HEK293 (cell line): ENCODE measurements at regions of chr20 and their contacts with region 1.

Region 1: GRCh38 chr20:36167826-36168531 is 13.4 kb downstream of the EPB41L1 start:
- H3K4me3 ChIP-seq: no peak overlapping the region
- H3K27ac ChIP-seq: no peak overlapping the region
- H3K4me1 ChIP-seq: no peaks in the 10 kb centered on the region
- CTCF ChIP-seq: no peak

Region 2: GRCh38 chr20:36154700-36155628 is 13.0 kb before region 1 on chr20 and contains the start of gene EPB41L1:
- CTCF ChIA-PET with region 1: interaction called, 21 read pairs
- POLR2A ChIA-PET with region 1: no interaction called
- H3K4me3 ChIP-seq: peak within 1 kb of the TSS; percentile 55
- H3K27ac ChIP-seq: peak within 1 kb of the TSS; percentile 46; the same call in 1 of the 2 replicates
- H3K4me1 ChIP-seq: peaks cover 8% of the 10 kb centered on the region
- CTCF ChIP-seq: no peak

Region 3: DNA sequence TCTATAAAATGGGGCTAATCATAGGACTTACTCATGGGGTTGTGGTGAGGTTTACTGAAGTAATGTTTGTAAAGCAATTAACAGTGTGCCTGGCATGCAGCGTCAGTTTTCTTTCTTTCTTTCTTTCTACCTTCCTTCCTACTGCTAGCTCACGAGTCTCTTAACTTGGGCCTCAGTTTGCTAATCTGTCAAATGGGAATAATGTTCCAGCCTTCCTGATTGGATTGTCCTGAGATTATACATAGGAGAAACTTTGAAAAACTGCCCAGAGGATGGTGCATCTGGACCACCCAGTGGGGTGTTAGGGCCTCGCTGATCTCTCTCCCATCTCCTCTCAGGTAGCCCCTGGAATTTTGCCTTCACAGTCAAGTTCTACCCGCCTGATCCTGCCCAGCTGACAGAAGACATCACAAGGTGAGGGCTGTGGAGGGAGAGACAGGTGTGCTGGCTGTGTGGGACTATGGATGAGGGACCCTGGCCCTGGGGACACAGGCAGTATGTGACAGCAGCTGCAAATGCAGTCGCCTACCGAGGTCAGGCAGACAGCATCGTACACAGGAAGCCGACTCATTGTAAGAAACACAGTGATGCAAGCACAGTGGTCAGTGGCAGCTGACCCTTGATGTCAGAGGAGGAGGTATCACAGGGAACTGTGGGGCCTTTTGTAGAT is 14.1 kb after region 1 on chr20:
- CTCF ChIA-PET with region 1: no interaction called
- POLR2A ChIA-PET with region 1: no interaction called
- H3K4me3 ChIP-seq: no peak overlapping the region
- H3K27ac ChIP-seq: no peak overlapping the region
- H3K4me1 ChIP-seq: no peaks in the 10 kb centered on the region
- CTCF ChIP-seq: no peak